Activated CD8-positive, alpha-beta memory T cell treated with anti-CD3 and anti-CD28 coated beads, Interleukin-2, amount 10 ng/mL, durations not matched to agents 7 days and 5 days (primary cell): ENCODE measurements at regions of chr7 and their contacts with region 1.

Region 1: DNA sequence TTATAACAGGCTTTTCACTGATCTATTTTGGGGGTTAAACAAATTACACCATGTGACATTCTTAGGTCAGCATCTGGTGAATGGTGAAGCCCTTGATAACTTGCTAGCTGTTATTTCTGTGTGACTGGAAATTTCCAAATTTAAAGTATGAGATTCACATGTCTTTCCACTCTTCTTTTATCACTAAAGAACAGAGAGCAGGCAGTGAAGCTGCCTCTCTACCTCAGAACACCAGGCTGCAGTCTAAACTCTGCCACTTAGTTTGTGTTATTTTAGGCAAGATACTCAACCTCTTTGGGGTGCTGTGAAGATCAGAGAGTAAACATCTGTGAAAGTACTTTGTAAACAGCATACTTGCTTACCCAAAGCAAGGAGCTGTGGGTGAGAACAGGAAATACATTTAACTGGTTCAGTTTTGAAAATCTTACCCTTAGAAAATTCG is 15.5 kb upstream of the SP4 start:
- DNase-seq: no peak
- ATAC-seq: peak; percentile 71
- H3K4me3 Mint-ChIP-seq: peak overlapping the region; percentile 19
- H3K27ac Mint-ChIP-seq: peak overlapping the region; percentile 80
- H3K4me1 Mint-ChIP-seq: peaks cover 31% of the 10 kb centered on the region
- H3K27me3 Mint-ChIP-seq: no peaks in the 10 kb centered on the region

Region 2: DNA sequence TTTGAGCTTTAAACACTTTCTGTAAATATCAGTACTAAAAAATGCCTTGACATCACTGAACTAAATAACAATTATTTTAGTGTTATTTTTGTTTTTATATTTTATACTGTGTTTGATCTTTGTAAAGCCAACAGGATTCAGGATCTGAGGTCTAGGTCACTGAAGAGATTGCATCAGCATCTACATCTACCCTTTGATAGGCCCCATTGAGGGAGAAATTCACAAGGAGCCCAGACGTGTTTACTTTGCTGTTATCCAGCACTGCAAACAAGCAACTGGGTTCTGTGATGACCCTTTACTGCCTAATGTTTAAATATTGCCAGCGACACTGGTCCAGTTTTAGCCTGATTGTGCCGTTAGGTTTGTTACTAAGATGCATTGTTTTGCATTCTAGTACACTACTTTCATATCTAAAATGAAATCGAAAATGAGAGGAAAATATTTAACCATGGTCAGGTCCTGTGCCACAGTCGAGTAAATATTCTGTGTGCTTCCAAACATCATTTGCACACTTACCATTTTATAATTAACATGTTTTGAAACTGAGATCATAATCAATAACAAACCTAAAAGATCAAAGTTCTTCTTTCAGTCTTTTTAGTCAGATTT is 674.5 kb before region 1 on chr7:
- CTCF ChIA-PET with region 1: no interaction called
- DNase-seq: no peak
- ATAC-seq: no peak
- H3K4me3 Mint-ChIP-seq: no peak overlapping the region
- H3K27ac Mint-ChIP-seq: no peak overlapping the region
- H3K4me1 Mint-ChIP-seq: no peaks in the 10 kb centered on the region
- H3K27me3 Mint-ChIP-seq: no peaks in the 10 kb centered on the region

Region 3: GRCh38 chr7:21400598-21400997 is 11.8 kb before region 1 on chr7:
- CTCF ChIA-PET with region 1: interaction called, 10 read pairs
- DNase-seq: no peak
- ATAC-seq: no peak
- H3K4me3 Mint-ChIP-seq: no peak overlapping the region
- H3K27ac Mint-ChIP-seq: no peak overlapping the region
- H3K4me1 Mint-ChIP-seq: no peaks in the 10 kb centered on the region
- H3K27me3 Mint-ChIP-seq: no peaks in the 10 kb centered on the region